Activated naive CD4-positive, alpha-beta T cell treated with anti-CD3 and anti-CD28 coated beads for 36 hours (primary cell): ENCODE measurements at regions of chr2 and their contacts with region 1.

Region 1: DNA sequence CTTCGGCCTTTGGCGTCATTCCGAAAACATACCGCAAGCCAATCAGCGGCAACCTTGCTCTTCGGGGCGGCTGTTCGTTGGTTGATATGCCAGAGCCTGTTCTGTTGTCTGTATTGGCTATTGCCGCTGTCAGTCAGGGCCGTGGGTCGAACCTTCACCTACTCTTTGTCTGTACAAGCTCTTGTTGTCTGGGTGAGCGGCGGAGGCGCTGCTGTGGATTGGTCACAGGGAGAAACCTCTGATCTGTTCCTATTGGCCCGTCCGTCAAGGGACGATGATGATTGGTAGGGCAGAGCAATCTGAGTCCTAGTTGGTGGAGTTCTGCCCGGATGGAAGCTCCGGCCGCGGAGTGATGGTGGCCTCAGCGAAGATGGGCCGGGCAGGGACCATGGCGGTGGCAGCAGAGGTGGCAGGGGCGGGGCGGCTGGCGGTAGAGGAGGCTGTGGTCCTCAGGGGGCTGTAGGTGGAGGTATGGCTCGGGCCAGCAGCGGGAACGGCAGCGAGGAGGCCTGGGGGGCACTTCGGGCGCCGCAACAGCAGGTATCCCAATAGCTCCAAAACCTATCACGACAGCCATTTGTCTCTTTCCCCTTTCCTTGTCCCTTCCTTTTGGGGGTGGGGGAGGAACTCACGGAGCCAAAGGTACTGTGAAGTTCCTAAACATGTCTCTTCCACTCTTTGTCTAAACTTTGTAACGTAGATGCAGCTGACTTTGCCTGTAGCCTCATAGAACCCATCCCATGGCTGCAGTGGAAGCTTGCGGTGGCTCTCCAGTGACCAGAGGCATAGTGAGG is at the start of gene WBP1:
- DNase-seq: peak; percentile 100
- H3K4me3 Mint-ChIP-seq: peak within 1 kb of the TSS; percentile 92
- H3K27ac Mint-ChIP-seq: peak within 1 kb of the TSS; percentile 99
- H3K4me1 Mint-ChIP-seq: peaks cover 43% of the 10 kb centered on the region
- H3K27me3 Mint-ChIP-seq: no peaks in the 10 kb centered on the region
- total RNA-seq, gene WBP1: 39.4 to 40.0 TPM

Region 2: DNA sequence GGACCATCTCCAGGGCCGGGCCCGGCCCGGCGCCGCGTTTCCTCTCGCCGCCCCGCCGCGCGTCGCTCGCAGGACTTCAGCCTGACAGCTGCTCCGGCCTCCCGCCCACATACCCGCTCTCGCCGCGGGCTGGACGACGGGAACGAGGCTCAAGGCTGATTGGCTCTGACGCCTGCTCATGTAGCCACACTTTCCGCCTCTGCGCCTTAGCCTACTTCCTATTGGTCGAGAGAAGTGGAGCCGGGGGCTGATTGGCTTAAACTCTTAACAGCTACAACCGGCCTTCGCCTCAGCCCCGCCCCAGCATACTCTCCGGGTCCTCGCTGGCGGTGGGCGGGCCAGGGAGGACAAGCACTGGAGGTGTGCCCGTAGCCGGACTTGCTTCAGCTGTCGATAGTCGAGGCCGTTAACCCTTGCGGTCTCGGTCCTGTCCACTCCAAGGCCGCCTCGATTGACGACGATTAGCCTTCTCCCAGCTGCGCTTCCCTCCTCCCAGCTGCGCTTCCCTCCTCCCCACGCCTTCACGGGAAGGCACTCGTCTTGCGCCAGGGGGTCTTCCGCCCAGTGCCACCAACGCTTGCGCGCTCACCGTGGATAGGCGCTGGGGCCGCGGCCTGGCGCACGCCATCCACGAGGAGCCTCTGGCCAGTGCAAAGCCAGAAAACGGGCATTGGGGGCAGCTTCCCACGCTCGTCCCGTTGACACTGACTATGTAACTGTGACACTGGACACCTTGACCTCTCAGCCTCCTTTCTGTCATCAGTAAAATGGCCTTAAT is 1225.0 kb before region 1 on chr2 and contains the start of gene PRADC1:
- CTCF ChIA-PET with region 1: no interaction called
- intact Hi-C with region 1: loop called (anchors 5 kb)
- DNase-seq: peak; percentile 97
- H3K4me3 Mint-ChIP-seq: peak within 1 kb of the TSS; percentile 88
- H3K27ac Mint-ChIP-seq: peak within 1 kb of the TSS; percentile 77
- H3K4me1 Mint-ChIP-seq: peaks cover 31% of the 10 kb centered on the region
- H3K27me3 Mint-ChIP-seq: no peaks in the 10 kb centered on the region
- total RNA-seq, gene PRADC1: 10.1 to 10.2 TPM

Region 3: DNA sequence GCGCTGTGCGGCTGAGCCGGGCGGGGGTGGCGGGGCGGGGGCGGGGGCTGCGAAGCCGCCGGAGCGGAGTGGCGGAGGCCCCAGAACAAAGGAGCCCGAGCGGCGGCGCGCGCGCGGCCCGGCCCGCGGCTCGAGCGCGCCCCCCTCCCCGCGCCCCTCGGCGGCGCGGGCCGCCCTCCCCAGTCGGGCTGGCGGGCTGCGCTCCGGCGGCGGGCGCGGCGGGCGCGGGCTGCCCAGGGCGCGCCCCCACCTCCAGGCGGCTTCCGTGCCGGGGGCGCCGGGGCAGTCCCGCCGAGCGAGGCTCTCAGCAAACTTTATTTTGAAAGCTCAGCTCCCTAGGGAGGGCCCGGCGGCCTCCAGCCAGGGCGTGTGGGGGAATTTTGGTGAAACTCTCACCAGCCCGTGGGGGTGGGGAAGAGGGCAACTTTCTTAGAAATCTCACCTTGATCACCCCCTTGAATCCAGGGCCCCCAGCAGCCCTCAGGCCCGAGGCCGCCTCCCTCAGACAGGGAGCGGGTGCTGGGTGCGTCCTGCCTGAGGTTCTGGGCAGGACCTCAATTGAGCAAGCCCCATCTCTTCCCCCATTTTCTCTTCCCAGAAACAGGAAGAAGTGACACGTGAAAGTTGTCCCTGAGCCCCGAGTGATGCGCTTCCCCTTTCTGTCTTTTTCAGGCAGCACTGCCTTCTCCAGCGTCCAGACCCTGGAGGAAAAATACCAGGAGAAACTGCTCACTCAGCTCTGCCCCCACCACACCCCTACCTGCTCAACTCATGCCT is 472.8 kb before region 1 on chr2:
- CTCF ChIA-PET with region 1: no interaction called
- intact Hi-C with region 1: loop called (anchors 5 kb)
- DNase-seq: peak; percentile 77
- H3K4me3 Mint-ChIP-seq: peak overlapping the region; percentile 80
- H3K27ac Mint-ChIP-seq: peak overlapping the region; percentile 90
- H3K4me1 Mint-ChIP-seq: peaks cover 64% of the 10 kb centered on the region
- H3K27me3 Mint-ChIP-seq: no peaks in the 10 kb centered on the region

Region 4: DNA sequence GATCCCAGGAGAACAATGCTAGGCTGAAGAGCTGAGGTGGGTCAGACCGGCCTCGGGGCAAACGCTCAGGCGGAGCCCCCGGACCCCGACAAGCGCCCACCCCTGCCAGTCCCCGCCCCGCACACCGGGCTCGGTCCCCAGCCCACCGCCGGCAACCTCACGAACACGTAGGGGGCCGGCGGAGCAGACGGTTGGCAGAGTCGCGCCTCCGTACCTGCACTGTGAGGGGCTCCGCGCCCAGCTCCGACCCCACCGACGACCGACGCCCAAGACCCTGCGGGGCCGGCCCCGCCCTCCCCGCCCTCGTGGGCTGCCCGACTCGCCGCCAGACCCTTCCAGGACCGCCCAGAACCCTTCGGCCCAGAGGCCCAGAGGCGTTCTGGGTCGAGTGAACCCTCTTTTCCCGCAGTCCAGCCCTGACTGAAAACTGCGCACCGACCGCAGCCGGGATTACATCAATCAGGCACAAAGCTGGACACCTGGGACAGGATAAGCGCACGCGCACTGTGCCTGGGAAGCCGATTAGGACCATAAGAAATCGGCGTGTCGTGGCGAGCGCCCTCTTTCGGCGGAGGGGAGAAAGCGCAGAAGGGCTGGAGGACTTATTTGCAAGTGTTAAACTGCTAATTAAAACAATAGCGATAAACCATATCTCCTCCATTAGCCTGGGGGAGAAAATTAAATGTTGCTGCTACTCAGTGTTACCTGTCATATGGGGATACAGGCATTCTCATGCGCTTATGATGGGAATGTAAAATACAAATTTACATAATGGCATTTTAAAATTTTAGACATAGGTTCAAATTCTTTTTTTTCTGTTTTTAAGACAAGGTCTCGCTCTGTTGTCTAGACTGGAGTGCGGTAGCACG is 66.5 kb before region 1 on chr2:
- CTCF ChIA-PET with region 1: interaction called, 6 read pairs
- intact Hi-C with region 1: loop called (anchors 1 kb)
- DNase-seq: peak; percentile 98
- H3K4me3 Mint-ChIP-seq: peak overlapping the region; percentile 92
- H3K27ac Mint-ChIP-seq: peak overlapping the region; percentile 96
- H3K4me1 Mint-ChIP-seq: peaks cover 4% of the 10 kb centered on the region
- H3K27me3 Mint-ChIP-seq: no peaks in the 10 kb centered on the region

Region 5: DNA sequence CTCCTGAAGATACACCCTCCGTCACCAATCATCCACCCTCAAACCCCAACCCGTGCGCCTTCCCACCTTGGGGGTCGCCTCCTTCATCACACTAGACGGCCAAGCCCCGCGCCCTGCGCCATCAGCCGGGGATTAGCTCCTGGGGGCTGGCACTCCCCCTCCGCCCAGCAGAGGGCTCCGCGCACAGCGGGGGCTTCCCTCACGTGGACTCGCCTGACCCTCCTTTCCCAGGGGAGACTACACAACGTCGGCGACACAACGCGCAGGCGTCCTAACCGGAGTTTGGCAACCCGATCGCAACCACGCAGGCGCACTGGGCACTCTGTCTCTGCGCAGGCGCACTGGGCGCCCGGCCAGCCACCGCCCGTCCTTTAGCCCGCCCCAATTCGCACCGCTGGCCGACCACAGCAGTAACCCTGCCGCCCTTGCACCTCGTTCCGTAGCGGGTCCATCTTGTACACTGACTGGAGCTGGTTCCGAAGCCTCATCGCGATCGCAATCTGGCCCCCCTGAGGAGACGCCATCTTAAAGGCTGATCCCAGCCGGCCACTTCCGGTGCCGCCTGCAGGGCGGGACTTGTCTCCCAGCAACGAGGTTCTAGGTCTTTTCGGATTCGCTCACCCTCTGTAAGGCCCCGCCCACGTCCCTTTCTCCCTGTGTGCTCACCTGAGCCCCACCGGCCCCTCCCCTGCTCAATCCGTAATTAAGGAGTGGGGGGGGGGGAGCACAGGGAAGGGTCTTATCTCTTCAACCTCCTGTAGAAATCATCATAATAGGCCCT is 49.0 kb after region 1 on chr2 and contains the start of gene PCGF1:
- CTCF ChIA-PET with region 1: no interaction called
- intact Hi-C with region 1: loop called (anchors 1 kb)
- DNase-seq: peak; percentile 99
- H3K4me3 Mint-ChIP-seq: peak within 1 kb of the TSS; percentile 91
- H3K27ac Mint-ChIP-seq: peak within 1 kb of the TSS; percentile 98
- H3K4me1 Mint-ChIP-seq: peaks cover 40% of the 10 kb centered on the region
- H3K27me3 Mint-ChIP-seq: peaks cover 41% of the 10 kb centered on the region
- total RNA-seq, gene PCGF1: 21.1 to 24.4 TPM

Region 6: DNA sequence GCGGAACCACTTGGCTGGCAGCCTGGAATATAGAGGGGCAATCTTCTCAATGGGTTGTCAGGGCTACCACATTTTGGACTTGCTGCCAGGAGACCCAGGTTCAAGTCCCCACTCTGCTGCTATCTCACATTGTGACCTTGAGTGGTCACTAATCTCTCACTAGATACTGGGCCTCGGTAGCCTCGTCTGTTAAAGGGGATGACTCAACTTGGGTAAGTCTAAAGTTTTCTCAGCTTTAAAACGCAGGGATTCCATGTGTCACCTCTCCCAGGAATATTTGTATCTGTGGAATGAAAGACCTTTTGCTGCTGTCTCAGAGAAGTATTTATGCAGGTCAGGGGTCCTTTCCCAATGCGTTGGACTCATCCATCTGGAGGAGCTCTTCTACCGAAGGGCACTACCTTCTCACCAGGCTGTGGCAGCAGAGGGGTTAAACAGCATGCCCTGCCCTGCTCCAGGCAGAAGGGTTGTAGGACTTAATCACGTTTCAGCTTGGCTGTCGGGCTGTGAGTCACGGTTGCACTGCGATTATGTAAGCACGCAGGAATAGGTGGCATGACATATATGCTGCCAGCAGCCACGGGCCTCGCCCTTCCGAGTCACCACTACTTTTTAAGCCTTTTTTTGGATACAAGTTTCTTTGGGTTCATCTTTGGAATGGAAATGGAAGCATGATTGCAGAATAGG is 282.2 kb after region 1 on chr2:
- CTCF ChIA-PET with region 1: no interaction called
- intact Hi-C with region 1: no loop called
- DNase-seq: no peak
- H3K4me3 Mint-ChIP-seq: no peak overlapping the region
- H3K27ac Mint-ChIP-seq: no peak overlapping the region
- H3K4me1 Mint-ChIP-seq: peaks cover 3% of the 10 kb centered on the region
- H3K27me3 Mint-ChIP-seq: peaks cover 2% of the 10 kb centered on the region

Region 7: DNA sequence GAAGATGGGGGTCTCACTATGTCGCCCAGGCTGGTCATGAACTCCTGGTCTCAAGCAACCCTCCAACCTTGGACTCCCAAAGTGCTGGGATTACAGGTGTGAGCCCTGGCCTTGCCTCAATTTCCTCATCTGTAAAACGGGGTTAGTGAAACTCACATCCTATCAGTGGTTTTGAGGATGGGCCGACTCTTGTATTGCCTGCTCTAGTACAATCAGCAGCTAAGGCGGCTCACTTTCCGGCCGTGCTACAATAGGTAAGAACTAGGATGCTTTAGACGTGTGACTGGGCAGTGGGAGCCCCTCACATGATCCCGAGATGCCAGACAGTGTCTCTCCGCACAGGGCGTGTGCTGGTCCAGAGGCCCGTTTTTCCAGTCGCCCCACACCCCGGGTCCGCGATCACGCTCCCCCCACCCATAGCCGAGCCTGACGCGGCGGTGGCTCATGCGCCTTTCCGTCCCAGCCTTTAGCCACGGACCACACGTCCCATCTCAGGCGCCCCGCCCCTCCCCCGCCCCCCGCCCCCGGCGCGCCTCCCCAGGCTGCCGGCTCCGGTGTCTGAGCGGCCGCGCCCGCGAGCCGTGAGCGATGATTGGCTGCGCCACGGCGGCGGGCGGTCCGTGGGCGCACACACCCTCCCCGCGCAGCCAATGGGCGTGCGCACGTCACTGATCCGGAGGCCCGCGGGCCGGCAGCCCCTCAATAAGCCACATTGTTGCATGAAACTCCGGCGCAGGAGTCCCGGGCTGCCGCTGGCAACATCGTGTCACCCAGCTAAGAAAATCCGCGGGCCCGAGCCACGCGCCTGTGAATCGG is 375.3 kb after region 1 on chr2 and contains the start of gene HK2:
- CTCF ChIA-PET with region 1: no interaction called
- intact Hi-C with region 1: loop called (anchors 1 kb)
- DNase-seq: peak; percentile 78
- H3K4me3 Mint-ChIP-seq: peak within 1 kb of the TSS; percentile 94
- H3K27ac Mint-ChIP-seq: peak within 1 kb of the TSS; percentile 86
- H3K4me1 Mint-ChIP-seq: peaks cover 41% of the 10 kb centered on the region
- H3K27me3 Mint-ChIP-seq: no peaks in the 10 kb centered on the region
- total RNA-seq, gene HK2: 37.9 to 38.7 TPM